Prostate gland (tissue), 2 donors: ENCODE measurements at regions of chr22 and their contacts with region 1.

Region 1: GRCh38 chr22:25447686-25448434 is 116.6 kb upstream of the GRK3 start:
- DNase-seq: peak; percentile 73
- H3K4me3 ChIP-seq: peak overlapping the region; percentile 57 to 64
- H3K27ac ChIP-seq: peak overlapping the region; percentile 54 to 75
- H3K4me1 ChIP-seq: no peaks in the 10 kb centered on the region
- H3K27me3 ChIP-seq: no peaks in the 10 kb centered on the region
- CTCF ChIP-seq: peak; percentile 88 to 94 (median 91)
- POLR2A ChIP-seq: no peak

Region 2: GRCh38 chr22:25327018-25327755 is 120.7 kb before region 1 on chr22:
- intact Hi-C with region 1: no loop called
- DNase-seq: no peak
- H3K4me3 ChIP-seq: no peak overlapping the region
- H3K27ac ChIP-seq: no peak overlapping the region
- H3K4me1 ChIP-seq: no peaks in the 10 kb centered on the region
- H3K27me3 ChIP-seq: no peaks in the 10 kb centered on the region
- CTCF ChIP-seq: no peak
- POLR2A ChIP-seq: no peak

Region 3: DNA sequence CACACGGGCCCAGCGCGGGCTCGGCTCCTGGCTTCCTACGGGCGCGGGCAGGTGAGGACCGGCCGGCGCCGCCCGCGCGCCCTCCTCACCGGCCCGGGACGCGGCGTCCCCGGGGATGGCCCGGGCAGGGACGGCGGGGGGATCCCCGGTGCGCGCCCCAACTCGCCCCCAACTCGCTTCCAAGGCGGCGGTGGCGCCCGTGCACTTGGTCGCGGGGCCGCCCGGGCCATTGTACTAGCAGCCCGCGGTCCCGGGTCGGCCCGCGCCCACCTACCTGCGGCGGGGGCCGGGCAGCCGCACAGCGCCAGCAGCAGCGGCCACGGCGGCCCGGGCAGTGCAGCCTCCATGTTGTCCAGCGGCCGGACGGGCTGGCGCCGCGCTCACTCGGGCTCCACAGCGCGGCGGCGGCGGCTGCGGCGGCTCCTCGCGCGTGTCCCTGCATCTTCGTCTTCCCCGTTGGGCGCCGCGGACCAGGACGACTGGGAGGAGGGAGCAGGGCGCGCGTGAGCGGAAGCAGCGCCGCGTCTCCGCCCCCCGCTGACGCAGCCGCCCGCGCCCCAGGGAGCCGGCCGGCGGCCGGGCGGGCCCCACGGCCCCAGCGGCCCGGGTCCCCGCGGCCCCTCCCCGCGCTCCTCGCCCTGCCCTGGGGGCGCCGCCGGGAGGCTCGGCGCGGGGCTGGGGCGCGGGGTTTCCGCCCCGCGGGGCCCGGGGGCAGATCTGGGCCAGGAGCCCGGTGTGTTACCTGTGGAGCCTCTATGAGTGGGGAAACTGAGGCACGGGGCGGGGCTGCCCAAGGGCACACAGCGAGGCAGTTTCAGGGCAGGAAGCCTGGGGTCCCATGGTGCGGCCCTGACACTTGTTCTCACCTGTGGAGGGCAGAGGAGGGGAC is 42.7 kb before region 1 on chr22:
- intact Hi-C with region 1: loop called (anchors 5 kb)
- DNase-seq: peak; percentile 73
- H3K4me3 ChIP-seq: peak overlapping the region; percentile 77 to 90
- H3K27ac ChIP-seq: peak overlapping the region; percentile 88
- H3K4me1 ChIP-seq: peaks cover 9% of the 10 kb centered on the region
- H3K27me3 ChIP-seq: no peaks in the 10 kb centered on the region
- CTCF ChIP-seq: peak in 1 of 4 experiments; percentile 7
- POLR2A ChIP-seq: peak; percentile 92

Region 4: GRCh38 chr22:26330966-26331625 is 883.2 kb after region 1 on chr22:
- intact Hi-C with region 1: loop called (anchors 10 kb)
- DNase-seq: peak; percentile 18
- H3K4me3 ChIP-seq: no peak overlapping the region
- H3K27ac ChIP-seq: no peak overlapping the region
- H3K4me1 ChIP-seq: no peaks in the 10 kb centered on the region
- H3K27me3 ChIP-seq: no peaks in the 10 kb centered on the region
- CTCF ChIP-seq: peak; percentile 51 to 75 (median 62)
- POLR2A ChIP-seq: no peak